Mammary epithelial cell (primary cell): ENCODE measurements at regions of chr15 and their contacts with region 1.

Region 1: GRCh38 chr15:82862886-82863285 is 53.5 kb downstream of the WHAMM start:
- DNase-seq: no peak
- H3K4me3 ChIP-seq: no peak overlapping the region
- H3K27ac ChIP-seq: no peak overlapping the region
- H3K4me1 ChIP-seq: no peaks in the 10 kb centered on the region
- H3K27me3 ChIP-seq: no peaks in the 10 kb centered on the region
- CTCF ChIP-seq: no peak

Region 2: GRCh38 chr15:82910721-82911120 is 47.8 kb after region 1 on chr15:
- CTCF ChIA-PET with region 1: no interaction called
- dilution Hi-C with region 1: loop called (anchors 5 kb)
- in situ Hi-C with region 1: no loop called
- intact Hi-C with region 1: no loop called
- DNase-seq: no peak
- H3K4me3 ChIP-seq: no peak overlapping the region
- H3K27ac ChIP-seq: no peak overlapping the region
- H3K4me1 ChIP-seq: no peaks in the 10 kb centered on the region
- H3K27me3 ChIP-seq: no peaks in the 10 kb centered on the region
- CTCF ChIP-seq: no peak

Region 3: DNA sequence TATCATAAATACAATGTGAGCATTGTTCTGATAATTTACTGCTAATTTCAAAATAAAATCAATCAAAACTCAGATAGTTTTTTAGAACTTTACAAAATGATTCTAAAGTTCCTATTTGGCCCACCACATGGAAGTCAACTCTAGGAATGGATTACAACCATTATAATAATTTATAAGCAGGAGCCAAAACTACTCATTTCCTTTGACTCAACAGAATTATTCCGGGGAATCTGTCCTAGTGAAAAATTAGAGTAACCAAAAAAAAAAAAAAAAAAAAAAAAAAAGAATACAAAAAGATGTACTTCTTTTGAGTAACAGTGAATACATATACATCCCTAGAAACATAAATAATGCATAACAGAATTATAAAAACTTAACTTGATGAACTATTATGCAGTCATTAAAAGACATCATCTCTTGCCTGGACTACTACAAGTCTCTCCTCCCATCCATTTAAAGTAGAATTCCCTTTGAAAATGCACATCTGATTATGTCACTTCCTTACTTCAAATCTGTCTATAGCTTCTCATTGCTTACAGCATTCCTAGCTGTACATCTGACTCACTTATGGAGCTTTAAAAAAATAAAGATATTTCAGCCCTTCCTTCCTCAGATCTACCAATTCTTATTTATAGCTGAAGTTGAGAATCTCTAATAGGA is 301.4 kb after region 1 on chr15:
- CTCF ChIA-PET with region 1: no interaction called
- dilution Hi-C with region 1: no loop called
- in situ Hi-C with region 1: no loop called
- intact Hi-C with region 1: no loop called
- DNase-seq: peak; percentile 19
- H3K4me3 ChIP-seq: no peak overlapping the region
- H3K27ac ChIP-seq: no peak overlapping the region
- H3K4me1 ChIP-seq: peaks cover 8% of the 10 kb centered on the region
- H3K27me3 ChIP-seq: no peaks in the 10 kb centered on the region
- CTCF ChIP-seq: no peak